B cell (primary cell): ENCODE measurements at regions of chr1 and their contacts with region 1.

Region 1: GRCh38 chr1:145858894-145859490 is at the start of gene PIAS3:
- DNase-seq: peak; percentile 91
- ATAC-seq: peak; percentile 85
- H3K4me3 ChIP-seq: peak within 1 kb of the TSS; percentile 74 to 96 (median 94)
- H3K4me3 Mint-ChIP-seq: peak within 1 kb of the TSS; percentile 98
- H3K27ac ChIP-seq: peak within 1 kb of the TSS; percentile 57 to 72
- H3K27ac Mint-ChIP-seq: peak within 1 kb of the TSS; percentile 94
- H3K4me1 ChIP-seq: peaks cover 9 to 14% of the 10 kb centered on the region in 2 donors
- H3K4me1 Mint-ChIP-seq: peaks cover 11% of the 10 kb centered on the region
- H3K27me3 ChIP-seq: peaks cover 0 to 7% (median 1%) of the 10 kb centered on the region in 4 experiments
- H3K27me3 Mint-ChIP-seq: peaks cover 9% of the 10 kb centered on the region
- CTCF ChIP-seq: no peak
- total RNA-seq, gene PIAS3: 45.0 and 51.0 TPM in 2 replicates

Region 2: DNA sequence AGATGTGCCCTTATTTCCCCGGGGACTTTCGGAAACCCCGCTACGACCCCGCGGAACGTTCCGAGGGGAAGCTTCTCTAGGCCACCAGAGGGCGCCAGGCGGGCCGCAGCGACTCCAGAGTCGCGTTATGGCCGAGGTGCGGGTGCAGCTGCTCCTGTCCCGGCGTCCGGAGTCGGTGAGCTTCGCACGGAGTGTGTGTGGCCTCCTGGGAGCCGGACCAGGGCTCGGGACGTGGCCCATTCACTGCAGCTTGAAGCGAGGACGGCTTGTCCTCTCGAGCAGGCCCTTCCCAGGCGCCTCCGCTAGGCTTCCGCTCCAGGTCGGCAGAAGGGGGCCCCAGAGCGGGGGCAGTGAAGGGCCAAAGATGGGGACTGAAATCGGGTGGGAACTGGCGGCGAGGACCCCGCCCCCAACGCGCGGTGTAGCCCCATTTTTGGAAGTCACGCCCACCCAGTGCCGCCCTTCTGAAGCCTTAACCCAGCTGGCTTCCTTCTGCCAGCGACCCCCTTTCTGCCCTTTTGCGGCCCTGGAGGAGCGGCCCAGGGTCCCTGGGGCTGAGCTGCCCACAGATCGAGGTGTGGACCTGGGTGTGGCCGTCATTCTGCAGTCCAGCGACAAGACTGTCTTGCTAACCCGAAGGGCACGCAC is 13.4 kb before region 1 on chr1 and contains the start of gene NUDT17:
- CTCF ChIA-PET with region 1: interaction called, 148 read pairs
- POLR2A ChIA-PET with region 1: interaction called, 70 read pairs
- intact Hi-C with region 1: loop called (anchors 1 kb)
- DNase-seq: peak; percentile 91
- ATAC-seq: peak; percentile 72
- H3K4me3 ChIP-seq: peak within 1 kb of the TSS; percentile 57 to 85 (median 70)
- H3K4me3 Mint-ChIP-seq: no peak within 1 kb of the TSS
- H3K27ac ChIP-seq: peak within 1 kb of the TSS; percentile 73 to 76
- H3K27ac Mint-ChIP-seq: no peak within 1 kb of the TSS
- H3K4me1 ChIP-seq: peaks cover 18 to 24% of the 10 kb centered on the region in 2 donors
- H3K4me1 Mint-ChIP-seq: peaks cover 7% of the 10 kb centered on the region
- H3K27me3 ChIP-seq: no peaks in the 10 kb centered on the region
- H3K27me3 Mint-ChIP-seq: no peaks in the 10 kb centered on the region
- CTCF ChIP-seq: peak; percentile 90
- total RNA-seq, gene NUDT17: 7.1 and 7.7 TPM in 2 replicates

Region 3: GRCh38 chr1:145891587-145892485 is 32.8 kb after region 1 on chr1:
- CTCF ChIA-PET with region 1: interaction called, 12 read pairs
- POLR2A ChIA-PET with region 1: interaction called, 22 read pairs
- intact Hi-C with region 1: no loop called
- DNase-seq: peak; percentile 61
- ATAC-seq: peak; percentile 70
- H3K4me3 ChIP-seq: no peak overlapping the region
- H3K4me3 Mint-ChIP-seq: no peak overlapping the region
- H3K27ac ChIP-seq: no peak overlapping the region
- H3K27ac Mint-ChIP-seq: no peak overlapping the region
- H3K4me1 ChIP-seq: no peaks in the 10 kb centered on the region
- H3K4me1 Mint-ChIP-seq: peaks cover under 1% of the 10 kb centered on the region
- H3K27me3 ChIP-seq: no peaks in the 10 kb centered on the region
- H3K27me3 Mint-ChIP-seq: no peaks in the 10 kb centered on the region
- CTCF ChIP-seq: peak; percentile 72

Region 4: DNA sequence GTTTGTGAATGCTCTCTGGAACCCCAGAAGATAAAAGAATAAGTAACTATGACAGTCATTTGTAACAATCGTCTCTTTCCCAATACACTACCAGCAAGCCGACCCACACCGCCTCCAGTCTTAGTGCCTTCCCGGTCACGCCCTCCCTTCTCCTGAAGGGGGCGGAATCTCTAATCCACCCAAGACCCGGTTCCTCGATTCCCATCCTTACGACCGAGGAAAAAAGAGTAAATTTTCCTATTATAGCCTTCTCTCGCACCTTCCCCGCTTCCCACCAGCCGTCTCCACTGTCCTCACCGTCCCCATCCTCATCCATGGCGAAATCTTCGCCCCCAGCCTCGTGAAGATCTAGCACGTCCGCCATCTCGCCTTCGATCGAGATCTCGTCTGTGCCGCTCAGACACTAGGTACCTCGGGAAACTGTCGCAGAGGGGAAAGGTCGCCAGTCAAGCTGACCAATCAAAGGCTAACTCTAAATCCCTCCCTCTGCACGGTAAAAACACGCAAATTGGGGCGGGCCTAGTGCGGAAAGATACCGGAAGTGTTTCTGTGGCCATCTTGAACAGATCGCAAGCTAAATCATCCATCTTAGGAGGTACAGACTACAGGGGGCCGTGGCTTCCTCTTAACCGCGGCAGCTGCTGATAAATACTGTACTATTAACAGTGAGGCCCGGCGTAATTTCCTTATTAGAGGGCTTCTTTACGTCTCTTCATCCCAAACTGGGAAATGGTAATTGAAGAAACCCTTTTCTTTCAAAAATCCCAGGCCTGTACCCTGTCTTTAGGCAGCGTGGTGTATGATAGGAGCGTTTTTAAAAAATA is 68.3 kb after region 1 on chr1 and contains the start of gene RBM8A:
- CTCF ChIA-PET with region 1: interaction called, 5 read pairs
- POLR2A ChIA-PET with region 1: interaction called, 18 read pairs
- intact Hi-C with region 1: loop called (anchors 2 kb)
- DNase-seq: peak; percentile 98
- ATAC-seq: peak; percentile 98
- H3K4me3 ChIP-seq: peak within 1 kb of the TSS; percentile 71 to 95 (median 83)
- H3K4me3 Mint-ChIP-seq: peak within 1 kb of the TSS; percentile 78
- H3K27ac ChIP-seq: peak within 1 kb of the TSS; percentile 96 to 99
- H3K27ac Mint-ChIP-seq: peak within 1 kb of the TSS; percentile 81
- H3K4me1 ChIP-seq: peaks cover 18 to 30% of the 10 kb centered on the region in 2 donors
- H3K4me1 Mint-ChIP-seq: peaks cover 11% of the 10 kb centered on the region
- H3K27me3 ChIP-seq: no peaks in the 10 kb centered on the region
- H3K27me3 Mint-ChIP-seq: no peaks in the 10 kb centered on the region
- CTCF ChIP-seq: peak; percentile 81
- total RNA-seq, gene RBM8A: 134 and 137 TPM in 2 replicates

Region 5: DNA sequence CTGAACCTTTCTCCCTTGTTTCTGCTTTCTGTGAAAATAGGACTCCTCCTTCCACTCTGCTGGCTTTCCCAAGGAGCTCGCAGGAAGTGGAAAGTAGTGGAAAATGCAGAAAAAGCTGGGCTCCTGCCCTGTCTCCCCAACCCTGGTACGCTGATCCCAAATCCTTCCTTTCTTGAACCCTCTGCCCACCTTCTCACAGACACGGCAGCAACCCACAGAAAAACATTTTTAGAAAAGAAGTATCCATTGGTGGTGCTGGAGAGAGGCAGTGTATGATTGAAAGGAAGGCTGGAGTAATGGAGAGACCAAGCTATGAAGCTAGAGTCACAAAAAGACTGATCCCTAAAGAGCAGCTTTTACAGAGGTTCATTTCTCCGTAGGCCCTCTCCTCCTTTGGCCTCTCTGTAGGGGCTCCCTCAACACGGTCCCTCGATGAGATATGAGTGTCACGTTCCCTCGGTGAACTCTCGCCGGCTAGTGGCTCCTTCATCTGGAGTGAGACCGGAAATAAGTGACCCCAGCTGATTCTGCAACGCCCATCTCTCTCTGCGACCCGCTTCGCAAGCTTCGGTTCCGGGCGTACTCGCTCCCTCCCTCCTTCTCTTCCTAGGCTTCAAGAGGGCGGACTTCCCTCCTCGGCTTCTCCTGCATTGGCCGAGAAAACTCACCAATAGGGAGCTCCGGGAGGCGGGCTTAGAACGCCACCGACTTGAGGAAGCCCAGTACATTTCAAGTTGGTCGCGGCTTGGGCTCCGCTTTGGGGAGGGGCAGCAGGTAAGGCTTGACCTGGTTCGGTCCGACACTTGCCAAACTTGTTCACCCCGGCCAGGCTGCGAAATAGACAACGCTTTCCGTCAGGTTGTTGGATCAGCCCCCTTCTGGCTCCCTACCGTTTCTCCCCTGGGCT is 105.3 kb after region 1 on chr1 and contains the starts of genes ANKRD34A and POLR3GL:
- CTCF ChIA-PET with region 1: interaction called, 5 read pairs
- POLR2A ChIA-PET with region 1: interaction called, 11 read pairs
- intact Hi-C with region 1: no loop called
- DNase-seq: peak; percentile 92
- ATAC-seq: peak; percentile 91
- H3K4me3 ChIP-seq: peak within 1 kb of the TSS; percentile 54 to 91 (median 87)
- H3K4me3 Mint-ChIP-seq: peak within 1 kb of the TSS; percentile 95
- H3K27ac ChIP-seq: peak within 1 kb of the TSS; percentile 59 to 85
- H3K27ac Mint-ChIP-seq: peak within 1 kb of the TSS; percentile 97
- H3K4me1 ChIP-seq: peaks cover 35 to 53% of the 10 kb centered on the region in 2 donors
- H3K4me1 Mint-ChIP-seq: peaks cover 61% of the 10 kb centered on the region
- H3K27me3 ChIP-seq: no peaks in the 10 kb centered on the region
- H3K27me3 Mint-ChIP-seq: no peaks in the 10 kb centered on the region
- CTCF ChIP-seq: no peak
- total RNA-seq, gene ANKRD34A: 1.8 and 2.8 TPM in 2 replicates
- total RNA-seq, gene POLR3GL: 26.3 and 33.3 TPM in 2 replicates

Region 6: GRCh38 chr1:146007506-146008133 is 148.6 kb after region 1 on chr1:
- CTCF ChIA-PET with region 1: interaction called, 11 read pairs
- POLR2A ChIA-PET with region 1: no interaction called
- intact Hi-C with region 1: no loop called
- DNase-seq: no peak
- ATAC-seq: no peak
- H3K4me3 ChIP-seq: no peak overlapping the region
- H3K4me3 Mint-ChIP-seq: no peak overlapping the region
- H3K27ac ChIP-seq: peak overlapping the region in 1 of 2 donors; percentile 83
- H3K27ac Mint-ChIP-seq: peak overlapping the region; percentile 95
- H3K4me1 ChIP-seq: peaks cover 13 to 24% of the 10 kb centered on the region in 2 donors
- H3K4me1 Mint-ChIP-seq: peaks cover 22% of the 10 kb centered on the region
- H3K27me3 ChIP-seq: no peaks in the 10 kb centered on the region
- H3K27me3 Mint-ChIP-seq: no peaks in the 10 kb centered on the region
- CTCF ChIP-seq: peak; percentile 18